Prostate gland (tissue), 2 donors: ENCODE measurements at regions of chr17 and their contacts with region 1.

Region 1: GRCh38 chr17:7351665-7352501 is at the start of gene KCTD11:
- DNase-seq: peak; percentile 92
- H3K4me3 ChIP-seq: peak within 1 kb of the TSS; percentile 49 to 94
- H3K27ac ChIP-seq: peak within 1 kb of the TSS; percentile 97 to 98
- H3K4me1 ChIP-seq: peaks cover 9% of the 10 kb centered on the region
- H3K27me3 ChIP-seq: no peaks in the 10 kb centered on the region
- CTCF ChIP-seq: peak in 3 of 4 experiments; percentile 47 to 73 (median 64)
- POLR2A ChIP-seq: peak; percentile 70
- total RNA-seq, gene KCTD11: 8.9 to 15.2 TPM

Region 2: DNA sequence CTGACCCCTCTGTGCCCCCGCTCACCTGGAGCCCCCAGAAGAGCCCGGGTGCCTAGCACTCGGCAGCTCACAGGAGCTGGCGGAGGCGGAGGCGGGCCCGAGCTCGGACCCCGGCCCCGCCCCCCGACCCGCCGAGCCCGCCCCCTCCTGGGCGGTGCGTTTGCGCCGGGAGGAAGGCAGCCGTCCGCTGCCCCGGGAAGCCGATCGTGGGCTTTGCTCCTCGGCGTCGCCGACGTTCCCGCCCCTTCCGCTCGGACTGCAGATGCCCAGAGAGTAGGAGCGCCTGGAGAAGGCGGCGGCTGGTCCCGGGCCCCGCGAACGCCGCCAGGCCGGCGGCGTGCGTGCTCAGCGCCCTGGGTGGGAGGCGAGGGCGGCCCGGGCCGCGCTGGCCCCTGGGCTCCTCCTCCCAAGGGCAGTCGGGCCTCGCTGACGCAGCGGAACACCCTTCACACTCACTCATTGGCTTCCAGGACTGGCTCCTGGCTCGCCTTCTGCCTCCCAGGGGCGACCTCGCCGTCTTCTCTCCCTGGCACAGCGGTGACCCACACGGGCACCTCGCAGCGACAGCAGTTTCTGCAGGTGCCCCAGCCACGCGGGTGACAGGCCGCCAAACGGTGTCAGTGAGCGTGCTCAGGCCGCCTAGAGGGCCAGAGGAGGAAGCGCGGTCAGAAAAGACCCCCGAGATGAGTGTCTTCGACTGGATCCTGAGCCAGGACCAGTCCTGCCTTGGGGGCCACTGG is 42.7 kb after region 1 on chr17 and contains the start of gene PLSCR3:
- intact Hi-C with region 1: loop called (anchors 5 kb)
- DNase-seq: peak; percentile 80
- H3K4me3 ChIP-seq: peak within 1 kb of the TSS; percentile 48 to 62
- H3K27ac ChIP-seq: peak within 1 kb of the TSS; percentile 74 to 87
- H3K4me1 ChIP-seq: no peaks in the 10 kb centered on the region
- H3K27me3 ChIP-seq: no peaks in the 10 kb centered on the region
- CTCF ChIP-seq: peak; percentile 15 to 50 (median 38)
- POLR2A ChIP-seq: peak; percentile 89
- total RNA-seq, gene PLSCR3: 25.8 to 26.4 TPM

Region 3: DNA sequence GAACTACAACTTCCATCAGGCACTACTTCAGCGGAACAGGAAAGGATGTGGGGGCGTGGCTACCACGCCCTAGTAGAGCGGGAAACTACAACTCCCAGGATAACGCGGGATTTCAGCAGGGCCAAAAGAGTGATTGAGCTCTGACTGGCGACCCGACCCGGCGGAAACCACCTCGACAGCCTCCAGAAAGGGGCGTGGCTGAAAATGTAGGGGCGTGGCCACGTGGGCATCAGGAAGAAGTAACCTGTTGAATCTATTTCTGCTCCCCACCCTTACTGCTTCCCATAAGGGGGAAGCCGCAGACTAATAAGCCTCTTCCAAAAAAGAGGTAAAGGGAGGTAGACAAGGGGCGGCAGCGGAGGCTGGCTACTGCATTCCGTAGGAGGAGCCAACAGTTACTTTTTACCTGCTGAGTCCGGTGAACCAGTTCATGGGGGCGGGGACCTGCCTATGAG is 83.4 kb after region 1 on chr17 and contains the start of gene TMEM102:
- intact Hi-C with region 1: loop called (anchors 1 kb)
- DNase-seq: peak; percentile 97
- H3K4me3 ChIP-seq: peak within 1 kb of the TSS; percentile 26 to 40
- H3K27ac ChIP-seq: peak within 1 kb of the TSS; percentile 81 to 82
- H3K4me1 ChIP-seq: peaks cover 15% of the 10 kb centered on the region
- H3K27me3 ChIP-seq: no peaks in the 10 kb centered on the region
- CTCF ChIP-seq: no peak
- POLR2A ChIP-seq: peak; percentile 78
- total RNA-seq, gene TMEM102: 9.9 to 10.3 TPM

Region 4: GRCh38 chr17:7484067-7484918 is 132.4 kb after region 1 on chr17 and contains the start of gene POLR2A:
- intact Hi-C with region 1: loop called (anchors 10 kb)
- DNase-seq: peak; percentile 97
- H3K4me3 ChIP-seq: peak within 1 kb of the TSS; percentile 63 to 72
- H3K27ac ChIP-seq: peak within 1 kb of the TSS; percentile 100
- H3K4me1 ChIP-seq: peaks cover 2% of the 10 kb centered on the region
- H3K27me3 ChIP-seq: no peaks in the 10 kb centered on the region
- CTCF ChIP-seq: peak in 2 of 4 experiments; percentile 28 to 42
- POLR2A ChIP-seq: peak; percentile 99
- total RNA-seq, gene POLR2A: 79.7 to 217 TPM

Region 5: DNA sequence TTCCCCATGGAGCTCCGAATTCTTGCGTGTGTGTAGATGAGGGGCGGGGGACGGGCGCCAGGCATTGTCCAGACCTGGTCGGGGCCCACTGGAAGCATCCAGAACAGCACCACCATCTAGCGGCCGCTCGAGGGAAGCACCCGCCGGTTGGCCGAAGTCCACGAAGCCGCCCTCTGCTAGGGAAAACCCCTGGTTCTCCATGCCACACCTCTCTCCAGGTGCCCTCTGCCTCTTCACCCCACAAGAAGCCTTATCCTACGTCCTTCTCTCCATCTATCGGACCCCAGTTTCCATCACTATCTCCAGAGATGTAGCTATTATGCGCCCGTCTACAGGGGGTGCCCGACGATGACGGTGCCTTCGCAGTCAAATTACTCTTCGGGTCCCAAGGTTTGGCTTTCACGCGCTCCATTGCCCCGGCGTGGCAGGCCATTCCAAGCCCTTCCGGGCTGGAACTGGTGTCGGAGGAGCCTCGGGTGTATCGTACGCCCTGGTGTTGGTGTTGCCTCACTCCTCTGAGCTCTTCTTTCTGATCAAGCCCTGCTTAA is 209.2 kb after region 1 on chr17:
- intact Hi-C with region 1: loop called (anchors 5 kb)
- DNase-seq: peak; percentile 92
- H3K4me3 ChIP-seq: peak overlapping the region; percentile 94 to 99
- H3K27ac ChIP-seq: peak overlapping the region; percentile 92 to 96
- H3K4me1 ChIP-seq: peaks cover 52% of the 10 kb centered on the region
- H3K27me3 ChIP-seq: no peaks in the 10 kb centered on the region
- CTCF ChIP-seq: peak; percentile 74 to 97 (median 91)
- POLR2A ChIP-seq: no peak

Region 6: GRCh38 chr17:7687908-7688807 is 336.3 kb after region 1 on chr17 and contains the start of gene WRAP53:
- intact Hi-C with region 1: loop called (anchors 5 kb)
- DNase-seq: peak; percentile 99
- H3K4me3 ChIP-seq: peak within 1 kb of the TSS; percentile 66 to 77
- H3K27ac ChIP-seq: peak within 1 kb of the TSS; percentile 90 to 93
- H3K4me1 ChIP-seq: peaks cover 9% of the 10 kb centered on the region
- H3K27me3 ChIP-seq: no peaks in the 10 kb centered on the region
- CTCF ChIP-seq: peak; percentile 90 to 100 (median 100)
- POLR2A ChIP-seq: peak; percentile 23
- total RNA-seq, gene WRAP53: 8.6 to 9.4 TPM

Region 7: GRCh38 chr17:7844292-7845154 is 492.6 kb after region 1 on chr17:
- intact Hi-C with region 1: loop called (anchors 5 kb)
- DNase-seq: peak; percentile 95
- H3K4me3 ChIP-seq: peak overlapping the region; percentile 67 to 72
- H3K27ac ChIP-seq: peak overlapping the region; percentile 98 to 99
- H3K4me1 ChIP-seq: peaks cover 14% of the 10 kb centered on the region
- H3K27me3 ChIP-seq: no peaks in the 10 kb centered on the region
- CTCF ChIP-seq: peak in 1 of 4 experiments; percentile 11
- POLR2A ChIP-seq: peak; percentile 93